ENCODE measurements at regions of chr12 and their contacts with region 1.

Region 1: GRCh38 chr12:32501835-32502333 is 102.5 kb downstream of the FGD4 start:
- DNase-seq: peak; percentile 20 to 53
- ATAC-seq: peak; percentile 73 to 82 (median 76)
- H3K4me3 ChIP-seq: peak overlapping the region; percentile 65
- H3K27ac ChIP-seq: peak overlapping the region; percentile 87
- H3K4me1 ChIP-seq: peaks cover 56% of the 10 kb centered on the region
- H3K27me3 ChIP-seq: no peaks in the 10 kb centered on the region
- CTCF ChIP-seq: no peak

Region 2: DNA sequence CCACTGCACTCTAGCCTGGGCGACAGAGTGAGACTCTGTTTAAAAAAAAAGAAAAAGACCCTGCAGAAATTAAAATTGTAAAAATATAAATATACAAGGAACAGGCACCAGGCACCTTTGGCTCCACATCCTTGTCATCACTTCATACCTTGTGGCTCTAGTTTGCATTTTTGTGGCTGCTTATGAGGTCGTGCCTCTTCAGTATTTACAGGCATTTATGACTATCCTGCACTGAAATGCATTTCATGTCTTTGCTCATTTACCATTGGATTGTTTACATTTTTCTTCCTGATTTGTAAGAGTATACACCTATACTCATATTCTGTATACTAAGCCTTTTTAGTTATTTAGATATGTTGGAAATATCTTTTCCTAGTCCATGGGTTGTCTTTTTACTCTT is 375.2 kb before region 1 on chr12:
- intact Hi-C with region 1: no loop called
- DNase-seq: no peak
- ATAC-seq: no peak
- H3K4me3 ChIP-seq: no peak overlapping the region
- H3K27ac ChIP-seq: no peak overlapping the region
- H3K4me1 ChIP-seq: no peaks in the 10 kb centered on the region
- H3K27me3 ChIP-seq: no peaks in the 10 kb centered on the region
- CTCF ChIP-seq: no peak

Region 3: GRCh38 chr12:32522331-32523221 is 20.7 kb after region 1 on chr12:
- intact Hi-C with region 1: no loop called
- DNase-seq: no peak
- ATAC-seq: peak in 1 of 4 donors; percentile 36
- H3K4me3 ChIP-seq: peak overlapping the region; percentile 14
- H3K27ac ChIP-seq: peak overlapping the region; percentile 52
- H3K4me1 ChIP-seq: peaks cover 23% of the 10 kb centered on the region
- H3K27me3 ChIP-seq: no peaks in the 10 kb centered on the region
- CTCF ChIP-seq: no peak

Region 4: GRCh38 chr12:32535288-32535999 is 33.6 kb after region 1 on chr12:
- intact Hi-C with region 1: loop called in 1 of 2 experiments (anchors 1 kb)
- DNase-seq: peak; percentile 79 to 91
- ATAC-seq: peak; percentile 88 to 94 (median 88)
- H3K4me3 ChIP-seq: peak overlapping the region; percentile 68
- H3K27ac ChIP-seq: peak overlapping the region; percentile 90
- H3K4me1 ChIP-seq: peaks cover 63% of the 10 kb centered on the region
- H3K27me3 ChIP-seq: no peaks in the 10 kb centered on the region
- CTCF ChIP-seq: no peak

Region 5: GRCh38 chr12:32688786-32689185 is 186.9 kb after region 1 on chr12:
- intact Hi-C with region 1: no loop called
- DNase-seq: no peak
- ATAC-seq: no peak
- H3K4me3 ChIP-seq: no peak overlapping the region
- H3K27ac ChIP-seq: no peak overlapping the region
- H3K4me1 ChIP-seq: peaks cover 18% of the 10 kb centered on the region
- H3K27me3 ChIP-seq: no peaks in the 10 kb centered on the region
- CTCF ChIP-seq: no peak

Measured in psoas muscle (tissue), 8 donors.